HepG2 (cell line): ENCODE measurements at regions of chr9 and their contacts with region 1.

Region 1: DNA sequence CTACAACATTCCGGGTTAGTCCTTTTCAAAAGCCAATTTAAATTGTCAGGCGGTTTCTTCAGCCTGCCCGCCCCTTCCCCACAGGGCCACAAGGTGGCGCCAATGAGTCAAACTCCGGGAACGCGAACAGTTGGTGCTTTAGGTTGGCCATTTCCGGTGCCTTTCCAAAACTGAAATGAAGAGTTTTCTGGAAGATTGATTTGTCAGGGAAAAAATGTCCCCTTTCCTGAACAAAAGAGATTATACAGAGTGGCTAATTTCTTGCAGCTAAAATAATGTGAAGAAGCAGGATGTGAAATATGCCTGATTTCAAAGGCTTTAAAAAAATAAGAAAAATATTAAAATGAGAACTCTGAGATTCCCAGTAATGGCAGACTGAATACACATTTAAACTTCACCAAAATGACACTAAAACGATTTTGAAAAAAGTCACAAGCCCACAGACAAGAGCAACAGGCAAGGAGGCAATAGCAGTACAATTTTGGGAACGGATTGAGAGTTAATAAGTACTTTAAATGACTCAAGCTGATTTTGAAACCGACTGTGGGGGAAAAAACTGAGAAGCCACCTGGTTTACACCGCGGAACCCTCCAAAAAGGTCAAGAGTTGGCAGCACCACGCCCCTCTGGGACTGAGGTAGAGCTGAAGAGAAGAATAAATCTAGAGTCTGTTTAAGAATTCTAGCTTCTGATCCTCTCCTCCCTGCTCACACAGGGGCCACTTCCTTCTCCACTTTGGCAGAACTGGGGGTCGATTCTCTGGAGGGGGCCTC is 45.7 kb downstream of the SLC46A2 start:
- DNase-seq: peak; percentile 52
- ATAC-seq: peak; percentile 79
- H3K4me3 ChIP-seq: no peak overlapping the region
- H3K27ac ChIP-seq: no peak overlapping the region
- H3K4me1 ChIP-seq: peaks cover 15% of the 10 kb centered on the region
- H3K27me3 ChIP-seq: no peaks in the 10 kb centered on the region
- CTCF ChIP-seq: peak; percentile 87
- EP300 ChIP-seq: no peak
- POLR2A ChIP-seq: no peak
- RAD21 ChIP-seq: peak; percentile 76

Region 2: GRCh38 chr9:112890106-112891081 is 45.4 kb after region 1 on chr9 and contains the start of gene SLC46A2:
- CTCF ChIA-PET with region 1: interaction called, 3 read pairs
- POLR2A ChIA-PET with region 1: no interaction called
- in situ Hi-C with region 1: loop called (anchors 5 kb)
- intact Hi-C with region 1: no loop called
- DNase-seq: no peak
- ATAC-seq: peak; percentile 78
- H3K4me3 ChIP-seq: peak within 1 kb of the TSS; percentile 6 to 52 (median 16); a peak in 4 of 6 replicates
- H3K27ac ChIP-seq: no peak within 1 kb of the TSS
- H3K4me1 ChIP-seq: no peaks in the 10 kb centered on the region
- H3K27me3 ChIP-seq: peaks cover 0 to 8% of the 10 kb centered on the region in 2 experiments; a peak in 1 of 5 replicates
- CTCF ChIP-seq: no peak
- EP300 ChIP-seq: no peak
- POLR2A ChIP-seq: no peak
- RAD21 ChIP-seq: no peak
- total RNA-seq, gene SLC46A2: not detected in 2 replicates

Region 3: GRCh38 chr9:112898872-112899311 is 53.9 kb after region 1 on chr9:
- CTCF ChIA-PET with region 1: interaction called, 48 read pairs
- POLR2A ChIA-PET with region 1: no interaction called
- in situ Hi-C with region 1: loop called (anchors 5 kb)
- intact Hi-C with region 1: loop called (anchors 1 kb)
- DNase-seq: peak; percentile 68
- ATAC-seq: peak; percentile 51; the same call in 2 of the 3 replicates
- H3K4me3 ChIP-seq: no peak overlapping the region; a peak in 1 of 6 replicates
- H3K27ac ChIP-seq: no peak overlapping the region
- H3K4me1 ChIP-seq: peaks cover 27% of the 10 kb centered on the region
- H3K27me3 ChIP-seq: no peaks in the 10 kb centered on the region
- CTCF ChIP-seq: no peak
- EP300 ChIP-seq: 0 out of 4 replicates have a peak, but pooled peaks of 1 of the 2 experiments have one; percentile 13
- POLR2A ChIP-seq: no peak
- RAD21 ChIP-seq: no peak